Heart right ventricle (tissue), 16 donors: ENCODE measurements at regions of chr9 and their contacts with region 1.

Region 1: DNA sequence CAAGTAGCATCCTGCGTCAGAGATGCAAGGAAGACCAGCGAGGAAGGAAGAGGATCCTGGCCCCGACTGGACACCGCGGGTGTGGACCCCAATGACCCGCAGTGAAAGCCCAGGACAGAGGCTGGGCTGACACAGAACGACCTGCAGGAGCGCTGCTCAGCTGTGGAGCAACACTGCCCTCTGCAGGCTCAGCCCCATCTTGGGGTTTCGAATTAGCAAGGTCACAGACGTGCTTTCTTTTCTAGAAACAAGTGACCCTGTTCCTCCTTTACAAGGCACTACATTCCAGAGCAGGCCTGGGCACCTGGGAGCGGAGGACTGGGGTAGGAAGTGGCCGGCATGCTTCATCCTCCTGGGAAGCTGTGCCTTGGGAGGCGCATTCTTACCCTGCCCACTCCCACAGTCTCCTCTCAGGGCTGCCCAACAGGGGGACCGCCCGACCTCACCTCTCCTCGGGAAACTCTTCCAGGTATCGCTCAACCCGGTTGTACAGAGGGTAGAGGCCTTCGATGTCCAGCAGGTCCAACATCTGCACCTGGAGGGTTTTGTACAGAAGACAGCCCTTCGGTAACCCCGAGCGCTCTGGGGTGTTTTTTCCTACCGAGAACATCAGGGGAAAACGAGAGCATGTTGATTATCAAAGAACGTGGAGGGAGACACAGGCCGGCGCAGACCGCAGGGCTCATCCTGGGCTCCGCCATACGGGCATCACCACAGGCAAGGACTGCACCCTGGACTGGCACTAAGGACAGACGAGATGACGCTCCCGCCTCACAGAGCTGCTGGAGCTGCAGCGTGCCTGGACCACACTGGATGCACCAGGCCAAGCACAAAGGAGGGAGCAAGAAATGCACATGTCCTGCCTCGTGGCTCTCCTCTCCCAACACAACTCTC is 35.0 kb downstream of the IPPK start:
- DNase-seq: peak; percentile 79 to 85
- ATAC-seq: peak; percentile 71 to 94 (median 88)
- H3K4me3 ChIP-seq: peak overlapping the region in 1 of 10 donors; percentile 13
- H3K27ac ChIP-seq: peak overlapping the region in 8 of 10 donors; percentile 18 to 59 (median 43)
- H3K4me1 ChIP-seq: peaks cover 0 to 12% (median 7%) of the 10 kb centered on the region in 9 donors
- H3K27me3 ChIP-seq: no peaks in the 10 kb centered on the region
- CTCF ChIP-seq: peak; percentile 87 to 97 (median 93)

Region 2: GRCh38 chr9:92133949-92134604 is 500.9 kb before region 1 on chr9:
- intact Hi-C with region 1: loop called (anchors 5 to 10 kb)
- DNase-seq: peak; percentile 72 to 81
- ATAC-seq: peak; percentile 48 to 86 (median 76)
- H3K4me3 ChIP-seq: peak overlapping the region in 3 of 10 donors; percentile 14 to 34 (median 16)
- H3K27ac ChIP-seq: no peak overlapping the region
- H3K4me1 ChIP-seq: peaks cover 0 to 9% (median 7%) of the 10 kb centered on the region in 9 donors
- H3K27me3 ChIP-seq: peaks cover 0 to 22% (median 0%) of the 10 kb centered on the region in 7 donors
- CTCF ChIP-seq: peak; percentile 81 to 99 (median 95)

Region 3: DNA sequence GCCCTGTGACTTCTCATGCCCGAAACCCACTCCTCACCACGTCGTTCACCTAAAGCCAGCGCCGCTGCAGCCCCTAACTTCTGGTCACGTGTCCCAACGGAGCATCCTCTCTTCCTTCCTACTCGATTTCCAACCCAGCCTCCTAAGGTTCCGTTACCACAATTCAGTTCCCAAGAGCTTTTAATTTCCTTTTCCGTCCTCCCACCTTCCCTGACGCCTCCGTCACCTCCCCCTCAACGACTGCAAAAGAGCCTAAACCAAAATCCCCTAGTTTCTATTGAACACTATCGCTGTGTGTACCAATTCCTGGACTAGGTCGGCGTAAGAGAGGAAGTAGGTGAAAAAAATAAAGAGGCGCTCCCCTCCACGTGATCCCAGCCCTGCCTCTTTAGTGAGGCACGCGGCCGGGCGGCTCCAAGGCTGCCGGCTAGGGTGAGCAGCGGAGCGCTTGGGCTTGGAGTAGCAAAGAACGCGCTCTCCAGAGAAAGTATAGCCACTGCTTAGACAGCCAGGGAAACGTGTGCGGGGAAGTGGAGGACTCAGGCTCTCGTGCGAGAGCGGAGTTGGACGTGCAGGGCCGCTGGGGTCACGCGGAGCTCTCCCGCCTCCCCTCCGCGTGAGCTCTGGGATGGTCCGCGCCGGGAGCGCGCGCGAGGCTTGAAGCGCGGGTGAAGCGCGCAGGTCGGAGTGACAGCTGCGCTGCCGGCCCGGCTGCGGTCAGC is 309.5 kb before region 1 on chr9 and contains the starts of genes CENPP and NOL8:
- intact Hi-C with region 1: loop called in 5 of 10 experiments (anchors 2 to 10 kb)
- DNase-seq: peak; percentile 81 to 89
- ATAC-seq: peak; percentile 98 to 99 (median 99)
- H3K4me3 ChIP-seq: peak within 1 kb of the TSS; percentile 66 to 90 (median 80)
- H3K27ac ChIP-seq: peak within 1 kb of the TSS; percentile 88 to 99 (median 96)
- H3K4me1 ChIP-seq: peaks cover 5 to 27% (median 19%) of the 10 kb centered on the region in 9 donors
- H3K27me3 ChIP-seq: no peaks in the 10 kb centered on the region
- CTCF ChIP-seq: no peak
- total RNA-seq, gene CENPP: 1.3 to 5.2 (median 3.1) TPM
- total RNA-seq, gene NOL8: 12.6 to 19.1 (median 15.0) TPM

Region 4: DNA sequence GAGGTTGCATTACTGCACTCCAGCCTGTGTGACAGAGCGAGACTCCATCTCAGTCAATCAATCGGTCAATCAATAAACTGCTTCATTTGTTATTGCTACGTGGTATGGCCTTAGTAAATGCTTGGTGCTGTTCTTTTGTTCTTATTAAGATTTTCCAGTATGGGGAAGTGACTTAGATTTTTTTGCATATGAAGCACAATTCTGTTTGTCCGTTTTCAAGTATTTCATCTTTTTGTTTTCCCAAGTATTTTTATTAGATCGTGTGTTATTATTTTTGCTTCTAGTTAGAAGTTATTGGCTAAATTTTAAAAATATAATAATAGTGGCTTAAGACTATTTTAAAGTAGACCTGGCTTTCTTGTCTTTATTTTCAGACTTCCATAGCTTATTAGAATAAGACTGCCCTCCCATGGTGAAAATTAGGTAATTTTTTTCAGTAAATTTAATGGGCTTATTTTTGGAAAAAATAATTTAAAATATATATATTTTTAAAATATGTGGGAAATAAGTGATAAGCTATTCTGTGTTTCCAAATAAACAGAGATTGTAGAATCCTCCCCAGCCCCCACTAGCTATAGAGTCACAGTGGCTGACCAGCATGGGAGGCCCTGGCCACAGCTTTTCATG is 195.9 kb before region 1 on chr9:
- intact Hi-C with region 1: loop called in 2 of 10 experiments (anchors 5 to 10 kb)
- DNase-seq: no peak
- ATAC-seq: no peak
- H3K4me3 ChIP-seq: no peak overlapping the region
- H3K27ac ChIP-seq: no peak overlapping the region
- H3K4me1 ChIP-seq: no peaks in the 10 kb centered on the region
- H3K27me3 ChIP-seq: no peaks in the 10 kb centered on the region
- CTCF ChIP-seq: peak in 7 of 9 donors; percentile 27 to 60 (median 48)

Region 5: DNA sequence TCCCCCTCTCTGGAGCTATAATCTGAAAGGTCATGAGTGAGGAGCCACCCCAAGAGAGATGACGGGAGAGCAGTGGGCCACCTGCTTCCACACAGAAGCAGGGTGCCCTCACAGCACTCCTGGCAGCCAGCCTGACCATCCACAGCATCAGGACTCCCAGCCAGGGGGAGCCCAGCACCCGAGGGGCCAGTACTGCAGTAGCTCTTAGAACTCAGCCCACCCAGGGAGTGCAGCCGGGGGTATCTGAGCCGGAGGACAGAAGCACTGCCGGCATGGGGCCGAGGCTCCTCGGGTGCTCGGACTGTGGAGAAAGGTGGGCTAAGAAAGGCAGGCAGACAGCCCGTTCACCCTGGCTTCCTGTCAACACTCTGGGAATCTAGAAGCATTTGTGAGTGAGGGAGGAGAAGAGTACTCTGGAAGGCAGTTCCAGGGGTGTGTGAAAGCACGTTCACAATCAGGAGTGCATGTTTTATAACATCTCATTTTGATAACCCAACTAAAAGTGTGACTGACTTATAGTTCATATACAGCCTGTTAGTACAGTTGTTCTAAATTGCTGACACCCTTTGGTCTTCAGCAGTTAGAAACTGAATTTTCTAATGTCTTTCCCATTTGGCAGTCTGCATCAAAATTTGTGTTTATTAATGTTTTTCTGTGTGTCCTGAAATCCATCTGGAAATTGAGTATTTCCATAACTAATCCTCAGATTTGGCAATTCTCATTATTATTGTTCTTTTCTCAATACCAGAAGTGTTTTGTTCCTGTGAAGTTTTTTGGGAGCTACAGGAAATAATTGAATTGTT is 126.7 kb before region 1 on chr9:
- intact Hi-C with region 1: loop called in 4 of 10 experiments (anchors 5 to 10 kb)
- DNase-seq: no peak
- ATAC-seq: peak in 7 of 8 donors; percentile 17 to 51 (median 37)
- H3K4me3 ChIP-seq: peak overlapping the region in 2 of 10 donors; percentile 7 to 14
- H3K27ac ChIP-seq: peak overlapping the region in 9 of 10 donors; percentile 15 to 72 (median 37)
- H3K4me1 ChIP-seq: peaks cover 7 to 61% (median 37%) of the 10 kb centered on the region in 9 donors
- H3K27me3 ChIP-seq: no peaks in the 10 kb centered on the region
- CTCF ChIP-seq: peak in 3 of 9 donors; percentile 18 to 40 (median 30)

Region 6: GRCh38 chr9:93254821-93255468 is 620.0 kb after region 1 on chr9:
- intact Hi-C with region 1: no loop called
- DNase-seq: no peak
- ATAC-seq: no peak
- H3K4me3 ChIP-seq: no peak overlapping the region
- H3K27ac ChIP-seq: no peak overlapping the region
- H3K4me1 ChIP-seq: peaks cover 0 to 13% (median 0%) of the 10 kb centered on the region in 9 donors
- H3K27me3 ChIP-seq: peaks cover 0 to 3% (median 0%) of the 10 kb centered on the region in 7 donors
- CTCF ChIP-seq: no peak